Activated CD4-positive, alpha-beta memory T cell treated with anti-CD3 and anti-CD28 coated beads for 36 hours (primary cell): ENCODE measurements at regions of chr1 and their contacts with region 1.

Region 1: GRCh38 chr1:211133836-211134669 is at the start of gene KCNH1:
- DNase-seq: peak; percentile 90
- H3K4me3 Mint-ChIP-seq: peak within 1 kb of the TSS; percentile 63
- H3K27ac Mint-ChIP-seq: no peak within 1 kb of the TSS
- H3K4me1 Mint-ChIP-seq: peaks cover 10% of the 10 kb centered on the region
- H3K27me3 Mint-ChIP-seq: peaks cover 34% of the 10 kb centered on the region
- total RNA-seq, gene KCNH1: not detected

Region 2: DNA sequence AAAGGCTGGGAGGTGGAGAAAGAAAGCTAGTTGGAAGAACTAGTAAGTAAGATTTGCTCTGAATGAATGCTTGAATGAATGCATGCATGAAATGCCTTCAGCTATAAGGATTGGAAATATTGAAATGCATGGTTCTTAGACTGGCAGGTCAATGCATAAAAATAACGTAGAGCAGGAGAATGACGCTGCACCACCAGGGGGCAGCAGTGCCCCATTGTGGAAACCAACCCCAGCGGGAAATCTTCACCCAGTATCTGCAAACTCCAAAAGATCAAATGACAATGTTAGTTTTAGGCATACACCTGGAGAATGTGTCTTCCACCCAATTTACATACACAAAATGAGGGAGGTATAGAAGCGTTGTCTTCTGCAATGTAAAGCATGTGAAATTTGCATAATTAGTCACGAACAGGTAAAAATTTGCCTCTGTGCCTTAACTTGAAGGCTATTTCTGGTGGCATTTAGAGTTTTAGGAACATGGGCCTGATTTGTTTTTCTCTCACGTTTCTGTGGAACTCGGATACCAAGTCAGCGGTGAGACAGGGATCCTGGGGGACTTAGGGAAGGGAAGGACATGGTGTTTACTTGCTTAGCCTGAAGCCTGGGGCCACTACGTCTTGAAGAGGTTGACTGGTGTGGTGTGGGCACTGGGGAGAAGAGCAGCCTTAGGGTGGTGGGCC is 726.7 kb before region 1 on chr1:
- CTCF ChIA-PET with region 1: interaction called, 59 read pairs
- POLR2A ChIA-PET with region 1: no interaction called
- intact Hi-C with region 1: loop called (anchors 1 kb)
- DNase-seq: peak; percentile 84
- H3K4me3 Mint-ChIP-seq: no peak overlapping the region
- H3K27ac Mint-ChIP-seq: no peak overlapping the region
- H3K4me1 Mint-ChIP-seq: peaks cover 2% of the 10 kb centered on the region
- H3K27me3 Mint-ChIP-seq: no peaks in the 10 kb centered on the region

Region 3: GRCh38 chr1:210413951-210414350 is 720.1 kb before region 1 on chr1:
- CTCF ChIA-PET with region 1: interaction called, 59 read pairs
- POLR2A ChIA-PET with region 1: no interaction called
- intact Hi-C with region 1: no loop called
- DNase-seq: no peak
- H3K4me3 Mint-ChIP-seq: no peak overlapping the region
- H3K27ac Mint-ChIP-seq: no peak overlapping the region
- H3K4me1 Mint-ChIP-seq: peaks cover 2% of the 10 kb centered on the region
- H3K27me3 Mint-ChIP-seq: no peaks in the 10 kb centered on the region

Region 4: GRCh38 chr1:210464519-210465039 is 669.5 kb before region 1 on chr1:
- CTCF ChIA-PET with region 1: interaction called, 3 read pairs
- POLR2A ChIA-PET with region 1: no interaction called
- intact Hi-C with region 1: loop called (anchors 5 kb)
- DNase-seq: peak; percentile 44
- H3K4me3 Mint-ChIP-seq: no peak overlapping the region
- H3K27ac Mint-ChIP-seq: no peak overlapping the region
- H3K4me1 Mint-ChIP-seq: peaks cover 24% of the 10 kb centered on the region
- H3K27me3 Mint-ChIP-seq: peaks cover 2% of the 10 kb centered on the region

Region 5: GRCh38 chr1:210584439-210585113 is 549.5 kb before region 1 on chr1:
- CTCF ChIA-PET with region 1: interaction called, 19 read pairs
- POLR2A ChIA-PET with region 1: no interaction called
- intact Hi-C with region 1: loop called (anchors 1 kb)
- DNase-seq: peak; percentile 85
- H3K4me3 Mint-ChIP-seq: no peak overlapping the region
- H3K27ac Mint-ChIP-seq: no peak overlapping the region
- H3K4me1 Mint-ChIP-seq: no peaks in the 10 kb centered on the region
- H3K27me3 Mint-ChIP-seq: peaks cover 3% of the 10 kb centered on the region

Region 6: DNA sequence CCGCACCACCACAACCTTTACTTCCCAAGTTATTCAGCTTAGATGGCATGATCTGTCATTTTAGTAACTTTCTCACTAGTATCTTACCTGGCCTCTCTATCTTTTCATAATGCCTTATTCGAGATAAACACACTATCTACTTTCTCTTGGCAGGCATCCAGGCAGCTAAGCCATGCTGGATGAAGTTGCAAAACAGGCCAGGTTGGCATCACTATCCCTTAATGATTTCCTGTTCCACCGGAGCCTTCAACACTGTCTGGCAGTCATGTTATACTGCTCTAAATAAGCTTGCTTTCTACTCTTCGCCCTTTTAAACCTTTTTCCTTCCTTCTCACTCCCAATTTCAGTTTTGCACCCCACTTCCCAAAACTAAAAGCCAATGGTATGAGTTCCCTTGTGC is 11.9 kb after region 1 on chr1:
- CTCF ChIA-PET with region 1: interaction called, 12 read pairs
- POLR2A ChIA-PET with region 1: no interaction called
- intact Hi-C with region 1: no loop called
- DNase-seq: no peak
- H3K4me3 Mint-ChIP-seq: no peak overlapping the region
- H3K27ac Mint-ChIP-seq: no peak overlapping the region
- H3K4me1 Mint-ChIP-seq: no peaks in the 10 kb centered on the region
- H3K27me3 Mint-ChIP-seq: peaks cover 22% of the 10 kb centered on the region

Region 7: GRCh38 chr1:211258756-211259637 is 124.9 kb after region 1 on chr1 and contains the start of gene RCOR3:
- CTCF ChIA-PET with region 1: interaction called, 19 read pairs
- POLR2A ChIA-PET with region 1: interaction called, 3 read pairs
- intact Hi-C with region 1: loop called (anchors 1 kb)
- DNase-seq: peak; percentile 95
- H3K4me3 Mint-ChIP-seq: peak within 1 kb of the TSS; percentile 83
- H3K27ac Mint-ChIP-seq: peak within 1 kb of the TSS; percentile 93
- H3K4me1 Mint-ChIP-seq: peaks cover 16% of the 10 kb centered on the region
- H3K27me3 Mint-ChIP-seq: no peaks in the 10 kb centered on the region
- total RNA-seq, gene RCOR3: 30.2 to 32.7 TPM